ENCODE measurements at regions of chr1 and their contacts with region 1.

Region 1: DNA sequence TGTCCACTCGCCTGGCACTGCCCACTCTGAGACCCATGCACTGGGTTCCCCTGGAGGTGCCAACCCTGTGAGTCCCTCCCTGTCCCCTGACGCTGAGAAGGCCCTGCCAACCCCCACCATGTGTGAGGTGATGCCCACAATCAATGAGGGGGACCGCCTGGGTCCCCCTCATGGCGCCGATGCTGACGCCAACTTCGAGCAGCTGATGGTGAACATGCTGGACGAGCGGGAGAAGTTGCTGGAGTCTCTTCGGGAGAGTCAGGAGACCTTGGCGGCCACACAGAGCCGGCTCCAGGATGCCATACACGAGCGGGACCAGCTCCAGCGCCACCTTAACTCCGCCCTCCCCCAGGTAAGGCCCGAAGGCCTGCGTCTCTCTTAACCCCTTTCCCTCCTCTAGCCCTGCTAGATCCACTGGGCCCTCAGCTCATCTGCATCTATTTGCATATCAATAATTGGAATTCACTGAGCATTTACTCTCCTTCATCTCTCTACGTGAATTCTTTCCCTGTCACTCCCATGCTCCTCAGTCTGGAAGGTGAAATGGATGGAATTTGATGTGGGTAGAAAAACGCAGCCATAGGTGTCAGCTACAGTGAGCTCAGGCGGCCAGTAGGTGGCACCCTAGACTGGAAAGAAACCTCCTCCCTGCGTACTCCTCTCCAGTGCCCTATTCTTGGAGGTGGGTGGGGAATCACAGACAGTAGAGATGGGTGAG is 12.8 kb downstream of the PPFIA4 start:
- DNase-seq: peak; percentile 52
- ATAC-seq: peak; percentile 92
- H3K4me3 ChIP-seq: no peak overlapping the region
- H3K27ac ChIP-seq: no peak overlapping the region
- H3K4me1 ChIP-seq: no peaks in the 10 kb centered on the region
- H3K27me3 ChIP-seq: no peaks in the 10 kb centered on the region
- CTCF ChIP-seq: peak; percentile 93

Region 2: DNA sequence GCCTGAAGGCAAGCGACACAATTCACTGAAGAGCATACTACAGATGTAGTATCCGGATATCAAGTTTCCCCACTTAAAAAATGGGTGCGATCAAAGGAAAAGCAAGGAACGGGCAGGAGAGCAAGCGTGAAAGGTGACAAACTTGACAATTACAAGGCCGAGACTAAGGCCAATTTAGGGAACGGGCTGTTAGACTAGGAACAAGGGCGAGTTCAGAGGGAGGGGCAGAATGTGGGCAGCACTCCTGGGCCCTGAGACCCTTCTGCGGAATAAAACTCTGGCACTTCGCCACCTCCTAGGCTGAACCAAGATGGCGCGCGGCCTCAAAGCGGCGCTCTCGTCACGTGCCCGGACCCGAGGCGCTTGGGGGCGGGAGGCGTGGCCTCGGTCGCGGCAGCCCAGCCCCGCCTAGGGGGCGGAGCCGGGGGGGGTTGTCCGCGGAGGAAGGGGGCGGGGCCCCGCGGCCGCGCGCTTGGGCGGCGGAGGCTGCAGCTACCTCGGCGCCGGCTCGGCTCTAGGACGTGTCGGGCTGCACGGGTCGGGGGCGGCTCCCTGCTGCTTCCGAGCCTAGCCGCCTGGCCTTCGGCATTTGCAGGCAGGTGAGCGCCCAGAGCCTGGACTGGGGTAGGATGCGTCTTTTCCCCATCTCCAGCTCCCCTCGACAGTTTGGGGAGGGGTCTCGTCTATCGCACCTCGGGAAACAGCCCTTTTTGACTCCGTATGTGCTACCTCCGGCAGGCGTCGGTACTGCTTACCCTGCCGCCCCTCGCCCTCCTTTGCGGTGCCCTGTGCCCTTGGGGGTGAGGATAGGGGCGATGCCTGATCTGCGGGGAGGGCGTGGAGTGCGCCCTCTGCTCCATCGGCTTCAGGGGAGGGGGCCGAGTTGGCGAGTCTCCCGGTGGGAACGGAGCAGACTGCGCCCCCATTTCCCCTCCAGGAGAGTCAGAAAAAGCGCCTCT is 12.7 kb before region 1 on chr1 and contains the start of gene PPFIA4:
- CTCF ChIA-PET with region 1: interaction called, 16 read pairs
- POLR2A ChIA-PET with region 1: no interaction called
- in situ Hi-C with region 1: no loop called
- intact Hi-C with region 1: no loop called
- DNase-seq: peak; percentile 30
- ATAC-seq: peak; percentile 91
- H3K4me3 ChIP-seq: peak within 1 kb of the TSS; percentile 53 to 66
- H3K27ac ChIP-seq: peak within 1 kb of the TSS; percentile 84
- H3K4me1 ChIP-seq: peaks cover 5% of the 10 kb centered on the region
- H3K27me3 ChIP-seq: no peaks in the 10 kb centered on the region; the same call in 1 of the 2 replicates
- CTCF ChIP-seq: peak; percentile 21; the same call in 1 of the 2 replicates
- total RNA-seq, gene PPFIA4: 1.9 TPM

Region 3: GRCh38 chr1:203117611-203118575 is 78.8 kb after region 1 on chr1:
- CTCF ChIA-PET with region 1: interaction called, 15 read pairs
- POLR2A ChIA-PET with region 1: no interaction called
- in situ Hi-C with region 1: no loop called
- intact Hi-C with region 1: loop called (anchors 5 kb)
- DNase-seq: peak; percentile 10
- ATAC-seq: peak; percentile 99
- H3K4me3 ChIP-seq: peak overlapping the region in 1 of 2 experiments; percentile 35; a peak in 2 of 4 replicates
- H3K27ac ChIP-seq: no peak overlapping the region
- H3K4me1 ChIP-seq: peaks cover 2% of the 10 kb centered on the region; the same call in 1 of the 2 replicates
- H3K27me3 ChIP-seq: peaks cover 8% of the 10 kb centered on the region; the same call in 1 of the 2 replicates
- CTCF ChIP-seq: peak; percentile 91

Region 4: DNA sequence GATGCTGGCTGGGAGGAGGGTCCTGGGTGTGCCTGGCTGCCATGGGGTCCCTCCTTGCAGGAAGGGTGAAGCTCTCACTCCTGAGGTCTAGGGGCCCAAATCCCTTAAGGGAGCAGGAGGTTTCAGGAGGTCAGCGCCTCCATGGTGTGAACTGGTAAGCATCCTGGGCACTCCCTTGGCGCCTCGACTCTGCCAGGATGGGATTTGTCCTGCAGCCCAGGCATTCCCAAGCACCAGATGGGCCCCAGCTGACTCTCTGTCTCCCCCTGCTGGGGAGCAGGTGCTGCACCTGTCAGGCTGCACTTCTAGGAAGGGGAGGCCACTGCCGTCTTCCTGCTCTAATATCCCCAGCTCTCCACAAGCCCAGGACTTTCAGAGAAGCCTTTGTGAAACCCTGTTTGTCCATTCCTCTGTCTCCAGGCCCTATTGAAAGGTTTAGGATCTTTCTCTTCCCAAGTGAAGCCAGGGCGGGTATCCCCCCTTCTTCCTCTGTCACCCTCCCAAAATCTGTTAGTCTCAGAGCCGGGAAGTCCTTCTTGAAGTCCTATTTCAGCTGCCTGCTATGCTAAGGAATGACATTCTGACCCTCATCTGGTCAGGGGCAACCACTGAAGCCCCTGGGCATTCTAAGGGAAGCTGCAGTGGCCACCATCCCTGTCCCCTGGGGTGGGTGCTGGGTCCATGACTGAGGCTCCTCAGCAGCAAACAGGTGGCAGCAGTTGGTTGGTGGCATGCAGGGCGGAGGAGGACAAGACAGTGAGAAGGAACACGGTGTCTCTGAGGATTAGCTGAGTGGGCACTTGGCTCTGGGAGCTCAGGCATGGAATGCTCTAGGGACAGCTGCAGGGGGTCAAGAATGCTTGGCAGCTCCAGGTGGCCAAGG is 133.3 kb after region 1 on chr1:
- CTCF ChIA-PET with region 1: interaction called, 4 read pairs
- POLR2A ChIA-PET with region 1: no interaction called
- in situ Hi-C with region 1: no loop called
- intact Hi-C with region 1: loop called (anchors 2 kb)
- DNase-seq: peak; percentile 51
- ATAC-seq: peak; percentile 87
- H3K4me3 ChIP-seq: no peak overlapping the region
- H3K27ac ChIP-seq: no peak overlapping the region
- H3K4me1 ChIP-seq: no peaks in the 10 kb centered on the region; the same call in 1 of the 2 replicates
- H3K27me3 ChIP-seq: no peaks in the 10 kb centered on the region
- CTCF ChIP-seq: peak; percentile 94

Region 5: GRCh38 chr1:203216274-203217138 is 177.5 kb after region 1 on chr1:
- CTCF ChIA-PET with region 1: interaction called, 43 read pairs
- POLR2A ChIA-PET with region 1: interaction called, 3 read pairs
- in situ Hi-C with region 1: no loop called
- intact Hi-C with region 1: loop called (anchors 2 kb)
- DNase-seq: peak; percentile 53
- ATAC-seq: peak; percentile 86
- H3K4me3 ChIP-seq: no peak overlapping the region
- H3K27ac ChIP-seq: no peak overlapping the region
- H3K4me1 ChIP-seq: no peaks in the 10 kb centered on the region
- H3K27me3 ChIP-seq: no peaks in the 10 kb centered on the region; the same call in 1 of the 2 replicates
- CTCF ChIP-seq: peak; percentile 83

Region 6: DNA sequence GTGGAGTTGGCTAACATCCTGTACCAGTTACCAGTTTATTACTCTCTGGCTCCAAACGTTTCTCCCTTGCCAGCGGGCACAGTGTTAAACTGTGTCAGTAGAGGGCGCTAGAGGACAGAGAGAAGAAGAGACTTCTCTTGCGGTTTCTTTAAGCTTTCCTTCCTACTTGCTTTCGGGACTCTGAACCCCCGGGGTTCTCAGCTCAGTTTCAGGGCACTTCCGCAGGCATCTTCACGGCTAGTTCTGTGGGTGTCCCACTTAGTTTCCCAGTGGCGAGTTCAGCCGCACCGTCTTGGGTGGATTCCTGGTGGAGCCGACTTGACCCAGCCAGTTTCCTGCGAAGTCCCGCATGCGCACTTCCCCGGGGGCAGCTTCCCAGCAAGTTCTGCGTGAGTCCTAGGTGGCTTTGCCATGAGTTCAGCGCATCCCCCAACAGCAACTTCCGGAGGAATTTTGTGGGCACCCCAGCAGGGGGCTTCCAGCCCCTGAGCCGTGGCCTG is 228.3 kb after region 1 on chr1:
- CTCF ChIA-PET with region 1: interaction called, 18 read pairs
- POLR2A ChIA-PET with region 1: no interaction called
- in situ Hi-C with region 1: no loop called
- intact Hi-C with region 1: loop called (anchors 1 kb)
- DNase-seq: peak; percentile 85
- ATAC-seq: peak; percentile 87
- H3K4me3 ChIP-seq: peak overlapping the region; percentile 59 to 81
- H3K27ac ChIP-seq: peak overlapping the region; percentile 73
- H3K4me1 ChIP-seq: peaks cover 3% of the 10 kb centered on the region; the same call in 1 of the 2 replicates
- H3K27me3 ChIP-seq: no peaks in the 10 kb centered on the region
- CTCF ChIP-seq: peak; percentile 95

Region 7: GRCh38 chr1:203492082-203492747 is 453.2 kb after region 1 on chr1:
- CTCF ChIA-PET with region 1: no interaction called
- POLR2A ChIA-PET with region 1: no interaction called
- in situ Hi-C with region 1: no loop called
- intact Hi-C with region 1: no loop called
- DNase-seq: no peak
- ATAC-seq: no peak
- H3K4me3 ChIP-seq: no peak overlapping the region
- H3K27ac ChIP-seq: no peak overlapping the region
- H3K4me1 ChIP-seq: no peaks in the 10 kb centered on the region
- H3K27me3 ChIP-seq: peaks cover 6% of the 10 kb centered on the region
- CTCF ChIP-seq: no peak

Region 8: GRCh38 chr1:204819495-204819894 is 1780.4 kb after region 1 on chr1:
- CTCF ChIA-PET with region 1: interaction called, 12 read pairs
- POLR2A ChIA-PET with region 1: no interaction called
- in situ Hi-C with region 1: no loop called
- intact Hi-C with region 1: no loop called
- DNase-seq: no peak
- ATAC-seq: no peak
- H3K4me3 ChIP-seq: no peak overlapping the region
- H3K27ac ChIP-seq: no peak overlapping the region
- H3K4me1 ChIP-seq: no peaks in the 10 kb centered on the region
- H3K27me3 ChIP-seq: peaks cover 17% of the 10 kb centered on the region
- CTCF ChIP-seq: no peak